Motor neuron (in vitro differentiated cells): ENCODE measurements at regions of chr6 and their contacts with region 1.

Region 1: DNA sequence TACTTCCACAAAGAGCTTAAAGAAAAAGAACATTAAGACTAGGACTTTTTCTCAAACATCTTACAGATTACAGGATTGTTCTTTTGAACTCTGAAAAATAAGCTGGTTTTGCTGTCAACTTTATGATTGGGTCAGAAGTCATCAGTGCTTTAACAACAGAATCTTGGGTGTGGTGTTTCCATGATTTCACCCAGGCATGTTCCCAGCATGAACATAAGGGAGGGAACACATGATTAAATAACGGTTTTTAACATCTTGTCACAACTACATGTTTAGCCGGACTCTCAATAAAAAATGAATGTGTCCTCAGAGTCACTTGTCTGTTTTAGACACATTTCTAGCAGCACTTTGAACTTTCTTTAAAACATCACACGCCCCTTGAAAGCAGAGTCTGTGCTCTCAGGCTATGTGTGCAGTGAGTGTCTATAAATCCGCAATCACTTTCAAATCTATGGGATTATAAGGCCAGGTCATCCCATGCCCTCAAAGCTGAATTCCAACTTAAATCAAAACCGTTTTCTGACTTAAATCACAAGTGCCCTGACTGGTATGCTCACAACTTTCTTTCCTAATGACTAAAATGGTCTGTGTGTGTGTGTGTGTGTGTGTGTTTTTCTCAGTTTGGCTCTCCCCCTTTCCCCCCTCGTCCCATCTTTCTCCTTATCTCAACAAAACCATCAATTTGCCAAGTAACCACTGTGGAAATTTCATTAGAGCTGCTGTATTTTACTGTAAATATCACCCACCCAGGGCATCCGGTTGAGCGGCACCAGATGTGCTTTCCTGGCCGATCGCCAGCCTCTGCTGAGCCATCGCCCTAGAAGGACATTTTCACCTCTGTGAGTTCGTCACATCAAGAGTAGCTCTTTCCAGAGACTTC is 216.8 kb upstream of the DTNBP1 start:
- ATAC-seq: peak in 5 of 8 experiments; percentile 40 to 93 (median 88)
- H3K4me3 ChIP-seq: no peak overlapping the region
- H3K27ac ChIP-seq: no peak overlapping the region
- H3K4me1 ChIP-seq: peaks cover 3 to 7% of the 10 kb centered on the region in 2 donors

Region 2: DNA sequence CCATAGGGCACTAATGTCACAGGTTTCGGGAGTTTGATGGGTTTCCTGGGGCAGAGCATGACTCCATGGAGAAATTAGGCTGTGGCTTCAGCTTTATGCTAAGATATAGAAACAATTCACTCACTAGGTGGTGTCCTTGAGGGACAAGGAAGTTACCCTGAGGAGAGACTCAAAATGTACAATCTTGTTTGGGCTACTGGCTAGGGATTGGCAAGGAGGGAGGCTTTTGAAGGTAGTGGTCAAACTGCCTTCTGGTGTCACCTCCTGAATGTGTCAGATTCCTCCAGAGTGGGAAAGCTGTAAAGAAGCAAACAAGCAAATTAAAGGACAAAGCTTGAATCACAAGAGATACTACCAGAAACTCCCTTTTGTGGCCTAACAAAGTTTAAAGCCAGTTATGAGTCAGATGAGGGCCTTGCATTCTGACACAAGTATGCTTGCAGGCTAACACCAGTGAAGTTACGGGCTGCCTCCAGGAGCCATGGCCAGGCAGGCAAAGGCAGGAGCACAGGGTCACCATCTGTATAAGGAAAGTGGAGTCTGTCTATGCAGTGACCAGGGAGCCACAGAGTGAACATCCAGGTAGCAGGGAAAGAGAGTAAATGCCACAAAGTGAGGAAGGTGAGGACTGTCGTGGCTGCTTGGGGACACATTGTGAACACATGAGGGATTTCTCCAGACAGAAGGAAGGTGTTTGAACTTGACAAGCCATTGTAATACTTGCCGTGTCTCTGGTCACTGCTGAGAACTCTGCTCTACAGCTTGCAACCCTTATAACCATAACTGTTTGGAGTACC is 109.1 kb before region 1 on chr6:
- in situ Hi-C with region 1: loop called in 1 of 9 experiments (anchors 25 kb)
- ATAC-seq: peak in 2 of 8 experiments; percentile 24 to 28
- H3K4me3 ChIP-seq: no peak overlapping the region
- H3K27ac ChIP-seq: no peak overlapping the region
- H3K4me1 ChIP-seq: peaks cover 22 to 27% of the 10 kb centered on the region in 2 donors